ENCODE measurements at regions of chr7 and their contacts with region 1.

Region 1: GRCh38 chr7:44044315-44045225 is at the start of gene DBNL:
- DNase-seq: peak; percentile 91 to 92
- ATAC-seq: peak; percentile 87 to 92
- H3K4me3 ChIP-seq: peak within 1 kb of the TSS; percentile 84 to 99 (median 90)
- H3K27ac ChIP-seq: peak within 1 kb of the TSS; percentile 88 to 98 (median 92)
- H3K4me1 ChIP-seq: peaks cover 23 to 32% of the 10 kb centered on the region in 2 donors
- H3K27me3 ChIP-seq: no peaks in the 10 kb centered on the region
- CTCF ChIP-seq: peak in 1 of 5 experiments; percentile 6
- POLR2A ChIP-seq: peak; percentile 75 to 90
- total RNA-seq, gene DBNL: 48.0 to 77.2 (median 56.0) TPM

Region 2: DNA sequence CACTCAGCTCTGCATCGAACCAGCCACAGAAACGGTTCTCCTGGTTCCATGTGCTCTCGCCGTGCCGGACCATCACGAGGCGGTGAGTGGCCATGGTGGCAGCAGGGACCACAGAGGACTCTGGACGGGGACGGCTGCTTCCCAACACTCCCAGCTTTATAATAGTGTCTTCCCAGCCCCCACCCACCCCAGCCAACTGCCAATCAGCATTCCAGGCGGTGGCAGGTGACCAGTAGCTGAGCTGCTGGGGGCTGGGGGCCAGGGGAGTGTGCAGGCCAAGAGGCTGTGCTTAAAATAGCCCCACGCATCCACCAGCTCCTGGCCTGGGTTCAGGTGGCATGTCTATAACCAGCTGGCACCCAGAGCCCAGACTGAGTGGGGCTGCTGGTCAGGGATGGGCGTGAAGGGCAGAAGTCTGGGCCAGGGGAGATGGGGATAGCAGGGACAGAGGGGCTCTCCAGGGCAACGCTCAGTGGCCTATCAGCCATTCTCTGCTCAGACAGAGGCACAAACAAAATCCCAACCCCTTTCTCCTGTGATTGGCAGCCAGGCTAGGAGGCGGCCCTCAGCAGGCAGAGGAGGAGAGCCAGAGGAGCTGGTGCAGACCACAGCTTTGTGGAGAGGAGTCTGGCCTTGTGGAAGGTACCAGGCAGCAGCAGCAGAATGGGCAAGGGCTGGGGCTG is 21.0 kb after region 1 on chr7 and contains the start of gene PGAM2:
- in situ Hi-C with region 1: no loop called
- intact Hi-C with region 1: loop called (anchors 1 kb)
- DNase-seq: peak; percentile 89 to 96
- ATAC-seq: peak; percentile 65 to 73
- H3K4me3 ChIP-seq: peak within 1 kb of the TSS; percentile 27 to 53 (median 46)
- H3K27ac ChIP-seq: peak within 1 kb of the TSS; percentile 85 to 95 (median 90)
- H3K4me1 ChIP-seq: peaks cover 56 to 70% of the 10 kb centered on the region in 2 donors
- H3K27me3 ChIP-seq: no peaks in the 10 kb centered on the region
- CTCF ChIP-seq: no peak
- POLR2A ChIP-seq: peak; percentile 73 to 75
- total RNA-seq, gene PGAM2: 129 to 355 (median 306) TPM

Region 3: GRCh38 chr7:45217358-45217757 is 1172.8 kb after region 1 on chr7:
- in situ Hi-C with region 1: no loop called
- intact Hi-C with region 1: no loop called
- DNase-seq: no peak
- ATAC-seq: no peak
- H3K4me3 ChIP-seq: no peak overlapping the region
- H3K27ac ChIP-seq: no peak overlapping the region
- H3K4me1 ChIP-seq: no peaks in the 10 kb centered on the region
- H3K27me3 ChIP-seq: peaks cover 0 to 9% (median 0%) of the 10 kb centered on the region in 3 donors
- CTCF ChIP-seq: peak in 1 of 5 experiments; percentile 22
- POLR2A ChIP-seq: no peak

Measured in gastrocnemius medialis (tissue), 4 donors.